ENCODE measurements at regions of chr3 and their contacts with region 1.

Region 1: DNA sequence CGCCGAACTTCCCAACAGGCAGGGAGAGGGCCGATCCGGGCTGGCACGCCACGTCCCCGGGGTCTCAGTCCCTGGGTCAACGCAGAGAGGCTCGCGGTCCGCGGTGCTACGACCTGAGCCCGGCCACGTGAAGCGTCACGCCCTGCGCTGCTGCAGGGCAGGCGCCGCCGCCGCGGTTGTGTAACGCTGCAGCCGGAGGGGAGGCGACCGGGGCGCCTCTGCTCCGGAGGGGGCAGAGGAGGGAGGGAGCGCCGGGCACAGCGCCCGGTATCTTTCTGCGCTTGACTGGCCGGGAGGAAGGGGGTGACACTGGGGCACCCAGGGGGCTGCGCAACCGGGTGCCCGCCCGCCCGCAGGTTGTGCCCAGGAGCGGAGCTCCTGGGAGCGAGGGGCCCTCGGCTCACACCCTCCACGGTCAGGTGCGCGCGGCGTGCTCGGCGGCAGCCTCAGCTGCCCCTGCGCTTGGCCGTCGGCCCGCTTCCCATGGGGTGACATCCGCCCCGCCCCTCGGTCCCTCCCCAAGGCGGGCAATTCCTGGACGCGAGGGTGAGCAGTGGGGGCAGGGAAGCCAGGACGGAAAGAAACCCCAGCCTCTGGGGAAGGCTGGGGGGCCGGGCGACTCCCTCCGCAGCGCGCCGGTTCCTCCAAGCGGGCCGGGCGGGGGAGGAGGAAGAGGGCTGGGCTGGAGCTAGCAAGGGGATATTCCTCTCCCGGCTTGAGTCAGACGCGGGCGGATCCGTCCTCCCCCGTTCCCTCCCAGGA is 852 bp upstream of the BHLHE40 start:
- DNase-seq: peak; percentile 54 to 83 (median 79)
- H3K4me3 ChIP-seq: peak overlapping the region; percentile 75
- H3K4me3 Mint-ChIP-seq: peak overlapping the region; percentile 97 to 100 (median 99)
- H3K27ac ChIP-seq: peak overlapping the region; percentile 100
- H3K27ac Mint-ChIP-seq: peak overlapping the region; percentile 98 to 100 (median 100)
- H3K4me1 ChIP-seq: peaks cover 43% of the 10 kb centered on the region
- H3K4me1 Mint-ChIP-seq: peaks cover 53 to 66% (median 60%) of the 10 kb centered on the region in 3 donors
- H3K27me3 ChIP-seq: no peaks in the 10 kb centered on the region
- H3K27me3 Mint-ChIP-seq: peaks cover 0 to under 1% of the 10 kb centered on the region in 2 donors

Region 2: DNA sequence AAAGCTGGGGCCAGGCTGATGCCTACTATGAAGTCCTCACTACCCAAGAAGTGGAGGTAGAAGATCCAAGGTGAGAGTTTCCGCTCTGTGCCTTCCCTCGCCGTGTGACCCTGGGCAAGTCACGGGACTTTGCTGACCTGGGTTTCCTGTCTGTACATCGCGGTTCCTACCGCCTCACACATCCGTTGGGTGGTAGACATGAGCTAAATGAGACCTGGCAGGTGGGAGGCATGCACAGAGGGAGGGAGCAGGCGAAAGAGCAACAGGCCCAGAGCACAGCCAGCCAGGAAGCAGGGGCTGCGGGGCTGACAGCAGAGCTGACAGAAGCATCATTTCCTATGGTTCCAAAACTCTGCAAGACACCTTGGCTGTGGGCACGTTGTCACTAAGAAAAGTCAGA is 156.4 kb before region 1 on chr3:
- CTCF ChIA-PET with region 1: interaction called, 37 read pairs
- POLR2A ChIA-PET with region 1: interaction called, 20 read pairs
- DNase-seq: peak; percentile 79 to 93 (median 85)
- H3K4me3 ChIP-seq: no peak overlapping the region
- H3K4me3 Mint-ChIP-seq: peak overlapping the region; percentile 1 to 74 (median 63)
- H3K27ac ChIP-seq: peak overlapping the region; percentile 5
- H3K27ac Mint-ChIP-seq: peak overlapping the region; percentile 89 to 99 (median 99)
- H3K4me1 ChIP-seq: peaks cover 58% of the 10 kb centered on the region
- H3K4me1 Mint-ChIP-seq: peaks cover 53 to 71% (median 68%) of the 10 kb centered on the region in 3 donors
- H3K27me3 ChIP-seq: no peaks in the 10 kb centered on the region
- H3K27me3 Mint-ChIP-seq: no peaks in the 10 kb centered on the region

Region 3: GRCh38 chr3:4834403-4834866 is 143.9 kb before region 1 on chr3:
- CTCF ChIA-PET with region 1: interaction called, 26 read pairs
- POLR2A ChIA-PET with region 1: interaction called, 7 read pairs
- DNase-seq: peak; percentile 52 to 84 (median 58)
- H3K4me3 ChIP-seq: no peak overlapping the region
- H3K4me3 Mint-ChIP-seq: peak overlapping the region; percentile 11 to 72 (median 56)
- H3K27ac ChIP-seq: no peak overlapping the region
- H3K27ac Mint-ChIP-seq: peak overlapping the region; percentile 69 to 98 (median 96)
- H3K4me1 ChIP-seq: peaks cover 78% of the 10 kb centered on the region
- H3K4me1 Mint-ChIP-seq: peaks cover 64 to 78% (median 75%) of the 10 kb centered on the region in 3 donors
- H3K27me3 ChIP-seq: no peaks in the 10 kb centered on the region
- H3K27me3 Mint-ChIP-seq: peaks cover 0 to 7% of the 10 kb centered on the region in 2 donors

Region 4: GRCh38 chr3:4880850-4881249 is 97.5 kb before region 1 on chr3:
- CTCF ChIA-PET with region 1: interaction called, 10 read pairs
- POLR2A ChIA-PET with region 1: no interaction called
- DNase-seq: no peak
- H3K4me3 ChIP-seq: no peak overlapping the region
- H3K4me3 Mint-ChIP-seq: no peak overlapping the region
- H3K27ac ChIP-seq: no peak overlapping the region
- H3K27ac Mint-ChIP-seq: no peak overlapping the region
- H3K4me1 ChIP-seq: no peaks in the 10 kb centered on the region
- H3K4me1 Mint-ChIP-seq: no peaks in the 10 kb centered on the region
- H3K27me3 ChIP-seq: no peaks in the 10 kb centered on the region
- H3K27me3 Mint-ChIP-seq: no peaks in the 10 kb centered on the region

Region 5: DNA sequence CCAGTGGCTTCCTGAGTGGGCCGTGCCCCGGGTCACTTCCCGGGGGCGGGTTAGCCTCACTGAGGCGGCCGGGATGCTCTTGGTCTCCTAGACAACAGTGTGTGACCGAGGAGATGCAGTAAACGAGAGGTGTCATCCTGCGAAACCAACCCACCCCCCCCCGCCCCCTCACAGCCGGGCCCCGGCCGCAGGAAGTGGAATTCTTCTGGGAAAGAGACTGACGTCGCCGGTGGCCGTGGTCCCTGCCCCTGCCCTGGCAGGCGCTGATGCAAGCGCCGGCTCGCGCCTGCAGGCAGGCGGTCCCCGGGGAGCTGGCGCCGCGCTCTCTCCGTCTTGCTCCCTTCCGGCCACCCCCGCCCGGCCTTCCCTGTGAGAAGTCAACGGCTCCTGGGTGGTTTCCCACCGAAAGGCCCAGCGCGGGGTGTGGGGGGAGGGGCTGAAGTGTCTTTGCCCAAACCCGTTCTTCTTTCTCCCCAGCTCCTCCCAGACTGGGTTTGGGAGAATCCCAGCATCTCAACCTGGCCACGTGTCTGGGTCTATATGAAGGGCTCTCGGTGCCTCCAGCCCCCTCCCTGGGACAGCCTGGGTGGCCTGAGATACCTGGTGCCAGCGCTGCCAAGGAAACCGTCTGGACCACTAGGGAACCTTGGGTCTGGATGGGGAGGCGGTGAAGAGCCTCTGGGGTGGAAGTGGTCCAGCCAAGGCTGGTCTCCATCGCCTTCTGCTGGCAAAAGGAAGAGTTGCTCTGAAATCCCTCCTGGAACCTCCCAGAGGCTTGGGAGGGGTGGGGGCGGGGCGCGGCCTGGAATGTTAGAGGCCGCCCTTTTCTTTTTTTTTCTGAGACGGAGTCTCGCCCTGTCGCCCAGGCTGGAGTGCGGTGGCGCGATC is 48.2 kb after region 1 on chr3:
- CTCF ChIA-PET with region 1: interaction called, 12 read pairs
- POLR2A ChIA-PET with region 1: interaction called, 4 read pairs
- DNase-seq: peak; percentile 27 to 71 (median 69)
- H3K4me3 ChIP-seq: peak overlapping the region; percentile 78
- H3K4me3 Mint-ChIP-seq: peak overlapping the region; percentile 82 to 90 (median 87)
- H3K27ac ChIP-seq: peak overlapping the region; percentile 47
- H3K27ac Mint-ChIP-seq: peak overlapping the region; percentile 78 to 97 (median 88)
- H3K4me1 ChIP-seq: peaks cover 2% of the 10 kb centered on the region
- H3K4me1 Mint-ChIP-seq: peaks cover 18 to 23% (median 22%) of the 10 kb centered on the region in 3 donors
- H3K27me3 ChIP-seq: no peaks in the 10 kb centered on the region
- H3K27me3 Mint-ChIP-seq: peaks cover 0 to 3% of the 10 kb centered on the region in 2 donors